ENCODE measurements at regions of chr20 and their contacts with region 1.

Region 1: DNA sequence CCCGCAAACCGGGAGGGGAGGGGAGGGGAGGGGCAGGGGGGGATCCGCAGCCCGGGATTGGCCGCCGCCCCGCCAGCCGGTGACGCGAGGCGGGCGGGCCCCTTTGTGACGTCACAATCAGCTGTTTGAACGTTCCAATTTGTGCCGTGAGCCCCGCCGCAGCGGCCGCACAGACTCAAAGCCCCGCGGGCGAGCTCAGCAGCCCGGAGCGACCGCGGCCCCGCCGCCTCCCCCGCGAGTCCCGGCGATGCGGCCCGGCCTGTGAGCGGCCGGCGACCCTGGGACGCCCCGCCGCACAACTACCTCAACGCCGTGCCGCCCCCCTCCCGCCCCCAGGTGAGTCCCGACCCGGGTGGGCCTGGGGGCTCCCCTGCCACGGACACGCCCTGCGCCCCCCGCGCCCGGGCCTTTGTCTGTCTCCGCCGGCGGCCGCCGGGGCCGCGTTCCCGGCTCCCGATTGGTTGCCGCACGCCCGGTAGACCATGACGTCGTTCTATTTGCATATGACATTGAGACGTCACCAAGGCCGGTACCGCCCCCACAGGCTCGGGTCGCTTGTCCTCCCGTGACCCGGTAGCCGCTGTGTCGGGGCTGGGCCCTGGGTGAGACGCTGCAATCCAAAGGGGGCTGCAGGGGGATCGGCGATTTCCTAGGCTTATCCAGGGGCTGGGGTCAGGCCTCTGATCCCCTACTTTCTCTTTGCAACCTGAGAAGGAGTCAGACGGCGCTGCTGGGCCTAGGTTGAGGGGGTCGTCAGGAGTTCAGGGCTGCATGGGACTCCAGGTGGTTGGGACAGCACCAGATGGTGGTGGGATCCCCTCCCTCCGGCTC is at the start of gene TP53INP2:
- DNase-seq: peak; percentile 69
- H3K4me3 ChIP-seq: peak within 1 kb of the TSS; percentile 49 to 78 (median 61)
- H3K27ac ChIP-seq: peak within 1 kb of the TSS; percentile 52
- H3K4me1 ChIP-seq: peaks cover 35% of the 10 kb centered on the region
- H3K27me3 ChIP-seq: no peaks in the 10 kb centered on the region
- CTCF ChIP-seq: no peak
- total RNA-seq, gene TP53INP2: 2.5 to 4.4 TPM

Region 2: DNA sequence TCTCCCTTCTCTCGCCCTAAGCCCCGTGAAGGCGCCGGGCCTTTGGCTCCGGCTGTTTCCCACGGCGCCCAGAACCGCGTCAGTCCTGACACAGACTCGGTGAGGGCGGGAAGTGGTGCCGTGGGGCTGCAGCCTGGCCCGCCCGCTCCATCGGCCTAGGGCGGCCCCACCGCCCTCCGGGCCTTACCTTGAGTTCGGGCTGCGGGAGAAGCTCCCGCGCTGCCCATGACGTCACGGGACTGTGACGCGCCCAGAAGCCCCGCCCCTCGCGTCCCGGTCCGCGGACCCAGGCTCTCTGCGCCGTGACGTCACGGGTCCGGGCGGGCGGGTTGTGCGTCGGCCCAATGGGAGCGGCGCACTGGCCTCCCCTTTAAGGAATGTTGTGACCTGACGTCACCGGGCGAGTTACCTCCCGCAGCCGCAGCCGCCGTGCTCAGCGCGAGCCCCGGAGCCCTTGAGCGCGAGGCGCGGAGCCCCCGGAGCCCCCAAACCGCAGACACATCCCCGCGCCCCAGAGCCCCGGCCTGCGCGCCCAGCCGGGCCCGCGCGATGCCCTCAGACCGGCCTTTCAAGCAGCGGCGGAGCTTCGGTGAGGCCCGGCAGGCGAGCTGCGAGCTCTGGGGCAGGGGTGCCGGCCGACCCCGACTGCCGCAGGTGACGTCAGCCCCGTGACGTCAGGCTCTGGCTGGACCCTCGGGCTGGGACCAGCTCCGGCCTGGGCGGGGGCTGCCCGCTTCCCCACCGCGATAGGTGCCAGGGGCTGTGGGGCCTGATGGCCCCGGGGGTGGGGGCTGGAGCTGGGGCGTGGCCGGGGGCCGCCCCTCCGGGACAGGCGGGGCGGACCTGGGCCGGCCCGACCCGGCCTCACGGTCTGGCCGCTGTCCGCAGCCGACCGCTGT is 145.8 kb before region 1 on chr20 and contains the start of gene MAP1LC3A:
- CTCF ChIA-PET with region 1: interaction called, 3 read pairs
- dilution Hi-C with region 1: no loop called
- in situ Hi-C with region 1: no loop called
- intact Hi-C with region 1: loop called (anchors 1 kb)
- DNase-seq: peak; percentile 79
- H3K4me3 ChIP-seq: peak within 1 kb of the TSS; percentile 55 to 73 (median 60)
- H3K27ac ChIP-seq: peak within 1 kb of the TSS; percentile 39
- H3K4me1 ChIP-seq: peaks cover 7% of the 10 kb centered on the region
- H3K27me3 ChIP-seq: no peaks in the 10 kb centered on the region
- CTCF ChIP-seq: no peak
- total RNA-seq, gene MAP1LC3A: 9.4 to 18.5 TPM

Region 3: DNA sequence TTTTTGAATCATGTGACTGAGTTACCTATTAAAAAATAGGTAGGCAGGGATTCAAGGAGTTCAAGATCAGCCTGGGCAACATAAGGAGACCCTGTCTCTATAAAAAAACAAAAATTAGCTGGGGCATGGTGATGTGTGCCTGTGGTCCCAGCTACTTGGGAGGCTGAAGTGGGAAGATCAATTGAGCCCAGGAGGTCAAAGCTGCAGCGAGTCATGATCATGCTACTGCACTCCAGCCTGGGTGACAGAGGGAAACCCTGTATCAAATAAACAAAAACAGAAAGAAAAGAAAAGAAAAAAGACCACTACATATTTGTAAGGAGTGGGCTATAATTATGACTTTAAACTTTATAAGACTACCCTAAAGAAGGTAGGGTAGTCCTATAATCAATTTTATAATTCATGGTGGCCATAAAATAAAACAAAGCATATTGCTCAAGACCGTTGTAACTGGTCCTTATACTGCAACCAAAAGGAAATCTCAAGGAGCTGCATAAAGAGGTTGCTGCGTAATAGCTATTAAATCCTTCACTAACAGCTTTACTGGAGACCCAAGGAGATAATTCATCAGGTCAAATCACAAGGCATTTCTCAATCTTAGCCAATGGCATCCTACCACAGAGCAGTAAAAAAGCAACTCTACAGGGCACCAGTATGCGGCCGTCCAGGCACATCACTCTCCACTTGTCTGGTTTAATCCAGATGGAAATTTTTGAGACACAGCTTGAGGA is 41.0 kb before region 1 on chr20:
- CTCF ChIA-PET with region 1: no interaction called
- dilution Hi-C with region 1: no loop called
- in situ Hi-C with region 1: no loop called
- intact Hi-C with region 1: loop called (anchors 5 kb)
- DNase-seq: no peak
- H3K4me3 ChIP-seq: no peak overlapping the region
- H3K27ac ChIP-seq: no peak overlapping the region
- H3K4me1 ChIP-seq: peaks cover 15% of the 10 kb centered on the region
- H3K27me3 ChIP-seq: no peaks in the 10 kb centered on the region
- CTCF ChIP-seq: no peak

Region 4: DNA sequence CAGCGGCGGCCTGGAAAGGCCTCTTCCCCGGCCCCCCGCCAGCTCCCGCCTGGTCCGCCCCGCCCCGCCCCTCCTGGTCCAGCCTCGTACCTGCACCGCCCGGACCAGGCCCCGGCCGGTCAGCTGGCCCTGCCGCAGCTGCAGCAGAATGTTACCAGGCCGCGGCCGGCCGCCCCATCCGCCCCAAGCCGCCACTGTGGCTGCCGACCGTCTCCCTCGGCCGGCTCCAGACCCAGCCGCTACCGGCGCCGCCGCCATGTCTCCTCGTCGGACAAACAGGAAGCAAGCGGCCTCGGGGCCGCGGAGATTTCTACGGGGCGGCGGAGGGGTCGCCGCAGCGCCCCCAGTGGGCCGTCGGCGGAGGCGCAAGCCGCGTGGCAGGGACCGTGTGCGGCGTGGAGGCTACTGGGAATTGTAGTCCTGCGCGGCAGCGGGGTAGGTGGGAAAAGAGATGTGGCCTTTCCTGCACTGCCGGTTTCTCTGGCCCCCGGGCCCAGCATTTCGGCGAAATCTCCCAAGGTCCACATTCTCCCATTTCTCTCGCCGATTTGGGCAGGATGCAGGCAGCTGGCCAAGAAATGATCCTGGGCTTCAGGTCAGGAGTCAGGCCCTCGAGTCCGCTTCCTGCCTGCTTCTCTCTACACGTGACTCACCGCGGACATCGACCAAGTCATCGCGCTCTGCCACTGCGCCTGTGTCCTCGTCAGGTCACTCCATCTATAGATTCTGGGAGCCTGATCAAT is 388.3 kb after region 1 on chr20 and contains the start of gene TRPC4AP:
- CTCF ChIA-PET with region 1: no interaction called
- dilution Hi-C with region 1: no loop called
- in situ Hi-C with region 1: no loop called
- intact Hi-C with region 1: no loop called
- DNase-seq: peak; percentile 87
- H3K4me3 ChIP-seq: peak within 1 kb of the TSS; percentile 75 to 99 (median 97)
- H3K27ac ChIP-seq: peak within 1 kb of the TSS; percentile 72
- H3K4me1 ChIP-seq: peaks cover 30% of the 10 kb centered on the region
- H3K27me3 ChIP-seq: no peaks in the 10 kb centered on the region
- CTCF ChIP-seq: peak; percentile 81 to 98
- total RNA-seq, gene TRPC4AP: 63.8 to 89.0 TPM